Adrenal gland (tissue), 19 donors: ENCODE measurements at regions of chr12 and their contacts with region 1.

Region 1: GRCh38 chr12:52230327-52231291 is 2.4 kb upstream of the KRT7 start:
- DNase-seq: no peak
- H3K4me3 ChIP-seq: no peak overlapping the region
- H3K27ac ChIP-seq: peak overlapping the region in 1 of 5 donors; percentile 34
- H3K4me1 ChIP-seq: peaks cover 0 to 7% of the 10 kb centered on the region in 2 donors
- H3K27me3 ChIP-seq: peaks cover 20% of the 10 kb centered on the region
- CTCF ChIP-seq: no peak
- POLR2A ChIP-seq: no peak

Region 2: GRCh38 chr12:52032804-52033502 is 197.7 kb before region 1 on chr12:
- intact Hi-C with region 1: no loop called
- DNase-seq: peak; percentile 98 to 99 (median 99)
- H3K4me3 ChIP-seq: peak overlapping the region in 2 of 4 donors; percentile 14 to 31
- H3K27ac ChIP-seq: peak overlapping the region; percentile 74 to 95 (median 91)
- H3K4me1 ChIP-seq: peaks cover 18 to 30% of the 10 kb centered on the region in 2 donors
- H3K27me3 ChIP-seq: no peaks in the 10 kb centered on the region
- CTCF ChIP-seq: no peak
- POLR2A ChIP-seq: peak; percentile 79 to 83

Region 3: DNA sequence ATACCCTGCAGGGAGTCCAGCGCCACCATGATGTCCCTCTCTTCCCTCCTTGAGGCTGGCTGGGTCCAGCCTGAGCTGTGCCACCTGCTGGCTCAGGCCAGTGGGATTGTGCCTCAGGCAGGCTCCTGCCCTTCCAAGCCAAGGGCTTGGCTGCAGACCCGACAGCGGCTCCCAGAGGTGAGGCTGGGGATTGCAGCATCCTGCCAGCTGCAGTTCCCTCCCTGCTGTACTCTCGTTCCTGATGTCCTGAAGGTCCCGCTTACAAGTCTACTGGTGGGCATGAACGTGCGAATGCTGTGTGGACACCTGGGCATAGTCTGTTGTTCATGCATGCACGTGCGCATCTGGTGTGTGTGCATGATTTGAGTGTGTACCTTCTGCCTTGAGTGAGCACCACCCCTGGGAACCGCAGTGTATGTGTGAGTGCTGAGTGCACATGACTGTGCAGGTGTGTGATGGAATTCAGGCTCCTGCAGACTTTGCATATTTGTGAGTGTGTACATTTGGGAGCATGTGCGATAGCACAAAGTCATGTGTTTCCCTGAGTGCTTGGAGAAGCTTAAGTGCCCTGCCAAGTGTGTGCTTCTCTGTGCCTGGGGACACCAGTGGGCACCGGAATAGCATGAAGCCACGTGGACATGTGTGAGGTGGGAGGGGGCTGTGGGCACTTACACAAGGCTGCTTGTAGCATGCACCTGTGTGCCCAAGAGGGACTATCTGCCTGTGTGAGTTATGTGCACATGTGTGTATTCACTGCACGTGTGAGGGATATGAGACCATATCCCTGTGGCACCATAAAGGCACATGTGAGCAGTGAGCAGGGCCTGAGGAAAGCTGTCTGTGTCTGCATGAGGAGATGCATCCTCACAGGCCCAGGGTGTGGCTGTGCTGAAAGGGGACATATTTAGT is 16.8 kb before region 1 on chr12:
- intact Hi-C with region 1: no loop called
- DNase-seq: peak; percentile 87 to 92 (median 90)
- H3K4me3 ChIP-seq: no peak overlapping the region
- H3K27ac ChIP-seq: no peak overlapping the region
- H3K4me1 ChIP-seq: peaks cover 0 to 20% of the 10 kb centered on the region in 2 donors
- H3K27me3 ChIP-seq: no peaks in the 10 kb centered on the region
- CTCF ChIP-seq: peak; percentile 97 to 100 (median 100)
- POLR2A ChIP-seq: no peak

Region 4: DNA sequence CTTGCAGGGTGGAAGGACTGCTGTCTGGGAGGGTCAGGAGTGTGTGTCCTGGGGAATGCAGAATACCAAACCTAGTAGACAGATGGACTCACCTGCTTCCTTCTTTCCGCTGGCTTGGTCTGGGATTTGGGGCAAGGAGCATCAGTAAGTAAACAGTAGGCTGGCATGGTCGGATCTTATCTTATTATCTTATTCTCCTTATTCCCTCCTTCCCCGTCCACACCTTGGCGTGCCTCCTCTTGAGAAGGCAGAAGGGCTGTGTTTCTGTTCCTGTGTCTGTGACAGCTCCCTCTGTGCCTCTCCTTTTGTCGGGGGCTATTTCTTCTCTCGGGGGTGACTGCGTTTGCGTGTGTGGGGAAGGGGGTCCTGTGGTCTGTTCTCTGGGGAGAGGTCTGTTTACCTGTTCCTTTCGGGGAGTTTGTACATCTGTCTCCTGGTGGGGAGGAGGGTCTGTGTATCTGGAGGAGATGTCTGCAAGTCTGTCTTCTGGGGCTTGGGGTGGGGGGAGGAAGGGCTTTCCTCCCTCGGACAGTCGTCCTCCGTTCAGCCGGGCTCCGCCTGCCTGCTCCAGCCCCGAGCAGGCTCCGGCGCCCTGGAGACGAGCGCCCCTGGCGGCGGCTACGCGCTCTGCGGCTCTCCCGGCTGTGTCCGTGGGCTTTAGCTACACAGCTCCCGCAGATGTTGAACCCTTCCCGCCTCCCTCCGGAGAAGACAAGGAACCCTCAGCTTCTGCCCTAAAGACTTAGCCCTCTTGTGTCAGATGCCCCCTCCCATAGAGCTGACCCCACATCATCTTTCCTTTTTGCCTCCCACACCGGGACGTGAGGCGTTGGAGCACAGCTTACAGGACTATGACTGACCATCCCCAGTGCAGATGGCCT is 48.2 kb after region 1 on chr12:
- intact Hi-C with region 1: loop called in 1 of 2 experiments (anchors 5 kb)
- DNase-seq: peak; percentile 52 to 84 (median 80)
- H3K4me3 ChIP-seq: peak overlapping the region in 1 of 4 donors; percentile 25
- H3K27ac ChIP-seq: no peak overlapping the region
- H3K4me1 ChIP-seq: peaks cover 4 to 7% of the 10 kb centered on the region in 2 donors
- H3K27me3 ChIP-seq: no peaks in the 10 kb centered on the region
- CTCF ChIP-seq: peak; percentile 72 to 99 (median 94)
- POLR2A ChIP-seq: no peak

Region 5: DNA sequence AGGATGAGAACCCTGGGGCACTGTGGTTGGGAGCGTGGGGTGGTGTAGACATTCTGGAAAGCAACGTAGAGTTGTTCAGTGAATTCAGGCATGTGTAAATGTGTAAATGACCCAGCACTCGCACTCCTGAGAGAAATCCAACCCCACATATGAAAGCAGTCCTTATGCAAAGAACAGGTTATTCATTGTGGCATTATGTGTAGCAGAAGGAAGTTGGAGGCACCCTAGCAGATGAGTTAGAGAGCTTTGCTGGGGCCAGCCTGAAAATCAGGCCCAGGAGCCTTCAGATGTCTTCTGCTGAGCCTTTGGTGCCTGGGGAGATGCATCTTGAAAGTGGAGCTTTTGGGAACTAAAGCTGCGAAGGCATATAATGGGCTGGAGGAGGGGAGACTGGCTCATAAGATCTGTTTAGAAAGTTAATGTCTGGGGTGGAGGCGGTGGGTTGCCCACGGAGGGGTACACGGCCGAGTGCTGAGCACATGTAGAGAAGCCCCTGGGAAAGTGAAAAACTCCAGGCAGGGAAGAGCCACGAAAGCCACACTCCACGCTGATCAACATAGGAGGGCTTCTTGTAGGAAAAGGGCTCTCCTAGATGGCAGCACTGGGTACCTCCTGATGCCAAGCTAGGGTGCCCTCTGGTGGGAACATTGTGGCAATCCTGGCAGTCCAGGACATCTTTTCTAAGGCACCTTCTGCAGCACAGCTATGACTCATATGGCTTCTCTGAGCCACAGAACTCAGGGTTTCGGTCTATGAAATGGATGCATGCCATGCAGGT is 96.6 kb after region 1 on chr12:
- intact Hi-C with region 1: loop called in 1 of 2 experiments (anchors 5 kb)
- DNase-seq: peak; percentile 77 to 93 (median 87)
- H3K4me3 ChIP-seq: no peak overlapping the region
- H3K27ac ChIP-seq: no peak overlapping the region
- H3K4me1 ChIP-seq: no peaks in the 10 kb centered on the region
- H3K27me3 ChIP-seq: peaks cover 4% of the 10 kb centered on the region
- CTCF ChIP-seq: peak; percentile 53 to 83 (median 77)
- POLR2A ChIP-seq: no peak